AG04450 (cell line): ENCODE measurements at regions of chr1 and their contacts with region 1.

Region 1: GRCh38 chr1:58515794-58516401 is 30.6 kb downstream of the OMA1 start:
- DNase-seq: peak; percentile 66
- H3K4me3 ChIP-seq: no peak overlapping the region
- H3K27ac ChIP-seq: no peak overlapping the region
- H3K27me3 ChIP-seq: no peaks in the 10 kb centered on the region
- CTCF ChIP-seq: peak; percentile 70

Region 2: GRCh38 chr1:58412071-58412580 is 103.8 kb before region 1 on chr1:
- CTCF ChIA-PET with region 1: no interaction called
- POLR2A ChIA-PET with region 1: no interaction called
- DNase-seq: no peak
- H3K4me3 ChIP-seq: no peak overlapping the region
- H3K27ac ChIP-seq: no peak overlapping the region
- H3K27me3 ChIP-seq: no peaks in the 10 kb centered on the region
- CTCF ChIP-seq: no peak

Region 3: DNA sequence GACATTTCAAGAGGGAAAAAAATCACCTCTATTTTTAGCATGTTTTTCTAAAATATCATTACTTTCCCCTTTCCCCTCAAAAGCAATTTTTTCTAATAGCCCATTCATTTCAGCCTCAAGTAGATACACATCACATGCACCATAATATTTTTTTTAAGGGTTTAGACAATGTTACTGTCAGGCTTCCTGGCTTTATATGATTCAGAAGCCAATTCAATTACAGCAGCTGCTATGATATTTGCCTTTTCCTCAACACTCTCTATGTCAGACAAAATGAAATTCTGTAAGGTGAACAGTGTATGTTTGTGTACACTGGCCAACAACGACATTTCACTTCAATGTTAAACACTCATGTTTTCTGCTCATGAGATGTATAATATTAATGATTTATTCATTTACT is 15.9 kb before region 1 on chr1:
- CTCF ChIA-PET with region 1: interaction called, 24 read pairs
- POLR2A ChIA-PET with region 1: no interaction called
- DNase-seq: no peak
- H3K4me3 ChIP-seq: no peak overlapping the region
- H3K27ac ChIP-seq: no peak overlapping the region
- H3K27me3 ChIP-seq: no peaks in the 10 kb centered on the region
- CTCF ChIP-seq: no peak

Region 4: GRCh38 chr1:58505286-58505685 is 10.6 kb before region 1 on chr1:
- CTCF ChIA-PET with region 1: interaction called, 24 read pairs
- POLR2A ChIA-PET with region 1: no interaction called
- DNase-seq: no peak
- H3K4me3 ChIP-seq: no peak overlapping the region
- H3K27ac ChIP-seq: no peak overlapping the region
- H3K27me3 ChIP-seq: no peaks in the 10 kb centered on the region
- CTCF ChIP-seq: no peak

Region 5: DNA sequence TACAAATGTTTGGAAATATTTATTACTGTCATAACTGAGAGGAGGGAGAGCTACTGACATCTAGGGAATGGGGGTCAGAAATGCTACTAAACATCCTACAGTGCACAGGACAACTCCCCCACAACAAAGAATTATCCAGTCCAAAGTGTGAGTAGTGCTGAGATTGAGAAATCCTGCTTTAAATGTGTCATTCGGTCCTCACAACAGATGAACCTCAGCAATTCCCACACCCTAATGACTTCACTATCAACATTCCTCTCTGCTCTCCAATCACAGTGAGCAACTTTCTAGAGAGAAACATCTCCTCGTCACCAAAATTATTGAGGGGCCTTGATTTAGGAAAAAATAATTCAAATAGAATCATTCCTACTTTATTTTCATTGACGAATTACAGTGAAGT is 12.6 kb after region 1 on chr1:
- CTCF ChIA-PET with region 1: interaction called, 84 read pairs
- POLR2A ChIA-PET with region 1: no interaction called
- DNase-seq: no peak
- H3K4me3 ChIP-seq: no peak overlapping the region
- H3K27ac ChIP-seq: no peak overlapping the region
- H3K27me3 ChIP-seq: no peaks in the 10 kb centered on the region
- CTCF ChIP-seq: no peak

Region 6: GRCh38 chr1:58539553-58539952 is 23.7 kb after region 1 on chr1:
- CTCF ChIA-PET with region 1: interaction called, 75 read pairs
- POLR2A ChIA-PET with region 1: no interaction called
- DNase-seq: no peak
- H3K4me3 ChIP-seq: no peak overlapping the region
- H3K27ac ChIP-seq: no peak overlapping the region
- H3K27me3 ChIP-seq: no peaks in the 10 kb centered on the region
- CTCF ChIP-seq: no peak

Region 7: DNA sequence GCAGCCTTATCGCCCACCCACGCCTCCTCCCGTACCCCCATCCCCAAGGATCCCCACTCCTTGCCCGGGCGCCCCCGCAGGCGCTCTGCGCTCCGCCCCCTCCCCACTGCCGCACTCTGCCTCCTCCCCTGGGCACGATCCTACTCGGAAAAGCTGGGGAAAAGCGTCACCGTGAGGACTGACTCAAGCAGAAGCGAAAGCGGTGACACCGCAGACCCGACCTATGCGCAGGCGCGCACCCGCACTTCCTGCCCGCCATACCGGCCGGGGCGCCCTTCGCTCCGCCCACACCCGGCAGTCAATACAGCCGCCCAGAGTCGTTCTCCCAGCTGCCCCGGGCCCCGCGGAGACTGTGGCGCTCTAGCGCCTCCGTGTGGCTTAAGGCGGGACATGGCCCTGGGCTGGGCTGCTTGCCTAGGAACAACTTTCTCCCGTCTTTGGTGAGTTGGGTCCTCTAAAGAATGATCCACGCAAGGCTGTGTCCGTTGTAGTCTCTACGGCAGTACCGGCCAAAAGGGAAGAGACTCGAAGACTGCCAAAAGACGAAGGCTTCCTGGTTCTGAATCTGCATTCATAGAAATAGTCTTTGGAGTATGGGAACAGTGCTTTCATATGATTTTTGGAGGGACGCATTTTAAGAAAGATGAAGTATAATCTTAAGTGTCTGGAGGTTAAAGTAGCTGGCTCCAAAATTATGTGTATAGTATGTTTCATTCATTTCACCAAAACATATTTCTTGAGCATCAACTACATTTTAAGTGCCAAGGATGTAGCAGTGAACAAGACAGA is 30.8 kb after region 1 on chr1 and contains the start of gene OMA1:
- CTCF ChIA-PET with region 1: interaction called, 75 read pairs
- POLR2A ChIA-PET with region 1: interaction called, 7 read pairs
- DNase-seq: peak; percentile 96
- H3K4me3 ChIP-seq: peak within 1 kb of the TSS; percentile 75
- H3K27ac ChIP-seq: peak within 1 kb of the TSS; percentile 97
- H3K27me3 ChIP-seq: peaks cover 18% of the 10 kb centered on the region
- CTCF ChIP-seq: peak; percentile 99
- polyA plus RNA-seq, gene OMA1: 12.1 and 17.3 TPM in 2 replicates

Region 8: GRCh38 chr1:58714544-58714943 is 198.6 kb after region 1 on chr1:
- CTCF ChIA-PET with region 1: no interaction called
- POLR2A ChIA-PET with region 1: no interaction called
- DNase-seq: no peak
- H3K4me3 ChIP-seq: no peak overlapping the region
- H3K27ac ChIP-seq: no peak overlapping the region
- H3K27me3 ChIP-seq: no peaks in the 10 kb centered on the region
- CTCF ChIP-seq: no peak